PC-3 (cell line): ENCODE measurements at regions of chr1 and their contacts with region 1.

Region 1: DNA sequence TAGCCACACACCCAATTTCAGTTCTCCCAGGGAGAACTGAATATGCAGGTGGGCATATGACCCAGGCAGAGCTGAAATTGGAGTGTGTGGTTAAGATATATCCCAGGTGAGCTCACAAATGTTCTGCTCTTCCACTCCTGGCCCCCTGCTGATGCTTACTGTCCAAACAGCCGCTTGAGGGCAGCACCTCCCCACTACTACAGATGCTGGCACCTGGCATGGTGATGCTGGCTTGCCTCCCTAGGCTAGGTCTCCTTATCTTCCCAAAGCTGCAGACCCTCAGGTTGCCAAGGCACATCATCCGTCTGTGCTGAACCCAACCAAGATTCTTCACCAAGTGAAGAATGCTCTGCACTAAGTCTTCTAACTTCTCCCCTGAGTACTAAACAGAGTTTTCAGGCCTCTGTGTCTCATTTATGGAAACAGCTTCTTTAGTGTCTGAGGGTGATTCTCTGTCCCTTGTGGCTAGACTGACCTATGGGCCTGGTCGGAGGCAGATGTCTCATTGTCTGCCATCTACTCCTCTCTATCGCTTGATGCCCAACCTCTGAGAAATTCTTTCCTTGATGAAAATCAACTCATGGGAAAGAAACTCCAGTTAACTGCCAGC is 27.2 kb downstream of the XCL1 start:
- DNase-seq: peak; percentile 85
- ATAC-seq: peak; percentile 95
- H3K4me3 ChIP-seq: no peak overlapping the region
- H3K27ac ChIP-seq: no peak overlapping the region
- H3K4me1 ChIP-seq: peaks cover 8% of the 10 kb centered on the region; the same call in 1 of the 2 replicates
- H3K27me3 ChIP-seq: no peaks in the 10 kb centered on the region
- CTCF ChIP-seq: peak; percentile 97

Region 2: DNA sequence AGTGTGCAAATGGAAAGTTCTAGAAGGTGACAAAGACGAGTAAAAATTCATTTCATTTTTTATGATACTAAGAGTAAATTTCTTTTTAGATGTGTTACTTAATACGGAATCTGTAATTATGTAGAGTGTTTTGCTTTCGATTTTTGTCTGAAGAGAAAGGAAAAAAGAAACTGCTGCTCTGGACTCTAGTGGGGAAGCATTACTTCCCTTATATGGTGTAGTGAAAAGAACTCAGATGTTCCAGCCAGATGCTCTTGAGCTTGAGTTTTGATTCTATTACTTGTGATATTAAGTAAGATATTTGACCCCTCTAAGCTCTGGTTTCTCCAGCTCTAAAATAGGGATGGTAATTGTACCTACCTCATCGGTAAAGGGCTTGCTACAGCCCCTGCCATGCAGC is 454.7 kb before region 1 on chr1:
- CTCF ChIA-PET with region 1: no interaction called
- POLR2A ChIA-PET with region 1: no interaction called
- intact Hi-C with region 1: no loop called
- DNase-seq: no peak
- ATAC-seq: no peak
- H3K4me3 ChIP-seq: no peak overlapping the region
- H3K27ac ChIP-seq: no peak overlapping the region
- H3K4me1 ChIP-seq: no peaks in the 10 kb centered on the region
- H3K27me3 ChIP-seq: no peaks in the 10 kb centered on the region
- CTCF ChIP-seq: no peak

Region 3: DNA sequence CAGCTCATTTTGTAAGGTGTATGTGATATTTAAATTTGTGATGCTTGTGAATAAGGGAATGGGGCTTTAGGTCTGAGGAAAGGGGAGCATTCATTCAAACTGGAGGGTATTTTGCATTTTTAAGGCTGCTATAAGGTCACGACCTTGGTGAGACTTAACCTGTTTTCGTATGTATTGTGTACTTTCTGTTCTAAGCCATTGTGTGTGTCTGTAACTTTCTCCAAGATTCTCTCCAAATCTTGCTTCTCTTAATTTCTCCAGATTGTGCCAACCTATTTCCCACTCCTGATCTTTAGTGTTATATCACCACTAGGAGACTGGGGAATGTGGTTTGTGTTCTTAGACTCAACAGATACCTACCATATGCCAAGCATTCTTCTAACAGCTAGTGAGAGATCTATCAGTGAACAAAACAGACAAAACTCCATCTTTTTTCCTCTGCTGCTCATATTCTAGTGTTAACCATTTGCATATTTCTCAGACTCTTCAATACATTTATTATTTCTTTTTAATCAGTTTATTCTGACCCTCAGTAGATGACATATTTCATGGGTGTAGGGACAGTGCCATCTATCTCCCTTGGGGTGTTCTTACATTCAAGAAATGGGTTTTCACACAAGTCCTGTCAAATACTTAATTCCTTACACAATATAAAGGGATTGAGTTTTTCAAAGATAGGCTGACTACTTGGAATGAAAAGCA is 530.3 kb after region 1 on chr1:
- CTCF ChIA-PET with region 1: no interaction called
- POLR2A ChIA-PET with region 1: no interaction called
- intact Hi-C with region 1: loop called (anchors 1 kb)
- DNase-seq: peak; percentile 34
- ATAC-seq: peak; percentile 33
- H3K4me3 ChIP-seq: no peak overlapping the region
- H3K27ac ChIP-seq: no peak overlapping the region
- H3K4me1 ChIP-seq: peaks cover 27% of the 10 kb centered on the region
- H3K27me3 ChIP-seq: no peaks in the 10 kb centered on the region
- CTCF ChIP-seq: peak; percentile 66